MCF 10A (cell line): ENCODE measurements at regions of chr11 and their contacts with region 1.

Region 1: DNA sequence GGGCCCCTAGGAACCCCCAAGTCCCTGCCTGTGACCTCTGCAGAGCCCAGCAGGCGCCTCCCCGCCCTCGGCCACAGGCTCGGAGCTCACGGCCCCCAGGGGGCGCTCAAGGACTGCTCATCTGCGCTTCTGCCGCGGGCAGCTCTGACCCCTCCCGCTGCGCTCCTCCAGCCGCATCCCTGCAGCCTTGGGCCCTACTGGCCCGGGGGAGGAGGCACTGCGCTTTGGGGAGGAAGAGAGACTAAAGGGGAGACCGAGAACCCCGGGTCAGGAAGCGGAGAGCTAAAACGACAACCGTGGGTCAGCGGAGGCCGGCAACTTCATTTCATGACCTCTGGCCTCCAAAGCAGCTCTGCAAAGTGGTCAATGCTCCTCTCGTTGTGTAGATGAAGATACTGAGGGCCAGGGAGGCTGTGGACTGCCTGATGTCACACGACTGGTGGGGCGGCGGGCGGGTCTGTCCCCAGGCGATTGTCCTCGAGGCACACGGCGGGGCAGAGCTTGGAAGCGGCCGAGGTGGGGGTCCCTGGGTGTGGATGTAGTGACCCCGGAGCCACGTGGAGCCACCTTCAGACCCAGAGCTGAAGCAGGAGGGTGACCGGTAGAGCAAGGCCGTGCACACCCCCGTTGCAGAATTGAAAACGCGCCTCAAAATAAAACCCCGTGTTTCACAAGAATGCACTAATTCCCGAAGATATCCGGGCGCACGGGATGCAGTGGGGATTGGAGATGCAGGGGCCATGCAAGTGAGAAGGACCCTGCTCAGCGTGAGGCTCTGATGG is 2.7 kb upstream of the KRTAP5-6 start:
- DNase-seq: peak; percentile 69
- H3K4me3 Mint-ChIP-seq: peak overlapping the region; percentile 11
- H3K27ac Mint-ChIP-seq: no peak overlapping the region
- H3K4me1 Mint-ChIP-seq: peaks cover 11% of the 10 kb centered on the region
- H3K27me3 Mint-ChIP-seq: no peaks in the 10 kb centered on the region
- CTCF ChIP-seq: peak; percentile 91

Region 2: GRCh38 chr11:1652771-1653540 is 41.3 kb before region 1 on chr11:
- CTCF ChIA-PET with region 1: interaction called, 43 read pairs
- POLR2A ChIA-PET with region 1: interaction called, 7 read pairs
- intact Hi-C with region 1: loop called (anchors 5 kb)
- DNase-seq: peak; percentile 52
- H3K4me3 Mint-ChIP-seq: no peak overlapping the region
- H3K27ac Mint-ChIP-seq: no peak overlapping the region
- H3K4me1 Mint-ChIP-seq: peaks cover 4% of the 10 kb centered on the region
- H3K27me3 Mint-ChIP-seq: peaks cover under 1% of the 10 kb centered on the region
- CTCF ChIP-seq: peak; percentile 97

Region 3: DNA sequence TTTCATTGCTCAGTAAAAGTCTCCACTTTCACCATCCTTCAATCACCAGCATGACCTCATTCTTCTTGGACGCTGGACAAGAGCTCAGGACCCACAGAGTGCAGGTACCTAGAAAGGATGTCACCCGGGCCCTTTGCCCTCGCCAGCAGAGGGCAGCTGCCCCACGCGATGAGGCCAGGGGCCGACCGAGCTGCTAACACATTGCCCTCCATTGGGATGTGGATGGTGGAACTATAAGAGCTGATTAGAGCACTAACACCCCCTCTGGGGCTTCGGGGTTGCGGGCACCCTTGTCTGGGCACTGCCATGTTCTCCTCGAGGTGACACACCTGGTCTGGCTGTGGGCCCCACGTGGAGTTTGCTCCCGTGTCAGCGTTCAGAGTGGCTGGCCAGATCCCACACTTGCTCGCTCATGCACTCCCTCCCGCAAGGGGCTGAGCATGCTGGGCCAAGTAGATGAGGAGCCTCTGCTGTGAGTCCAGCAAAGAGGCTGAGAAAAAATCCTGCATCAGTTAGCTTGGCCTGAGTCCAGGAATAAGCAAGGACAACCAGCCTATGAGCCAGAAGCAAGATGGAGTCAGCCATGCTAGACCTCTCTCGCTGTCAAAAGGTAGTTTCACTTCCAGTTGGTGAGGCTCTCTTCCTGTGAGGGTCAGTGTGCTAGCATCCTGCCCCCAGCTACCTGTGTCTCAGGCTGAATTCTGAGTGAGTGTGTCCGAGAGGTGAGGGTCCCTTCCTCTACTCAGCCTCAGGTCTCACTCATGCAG is 12.6 kb after region 1 on chr11:
- CTCF ChIA-PET with region 1: interaction called, 29 read pairs
- POLR2A ChIA-PET with region 1: interaction called, 3 read pairs
- intact Hi-C with region 1: no loop called
- DNase-seq: peak; percentile 29
- H3K4me3 Mint-ChIP-seq: no peak overlapping the region
- H3K27ac Mint-ChIP-seq: no peak overlapping the region
- H3K4me1 Mint-ChIP-seq: peaks cover 5% of the 10 kb centered on the region
- H3K27me3 Mint-ChIP-seq: peaks cover 22% of the 10 kb centered on the region
- CTCF ChIP-seq: no peak

Region 4: DNA sequence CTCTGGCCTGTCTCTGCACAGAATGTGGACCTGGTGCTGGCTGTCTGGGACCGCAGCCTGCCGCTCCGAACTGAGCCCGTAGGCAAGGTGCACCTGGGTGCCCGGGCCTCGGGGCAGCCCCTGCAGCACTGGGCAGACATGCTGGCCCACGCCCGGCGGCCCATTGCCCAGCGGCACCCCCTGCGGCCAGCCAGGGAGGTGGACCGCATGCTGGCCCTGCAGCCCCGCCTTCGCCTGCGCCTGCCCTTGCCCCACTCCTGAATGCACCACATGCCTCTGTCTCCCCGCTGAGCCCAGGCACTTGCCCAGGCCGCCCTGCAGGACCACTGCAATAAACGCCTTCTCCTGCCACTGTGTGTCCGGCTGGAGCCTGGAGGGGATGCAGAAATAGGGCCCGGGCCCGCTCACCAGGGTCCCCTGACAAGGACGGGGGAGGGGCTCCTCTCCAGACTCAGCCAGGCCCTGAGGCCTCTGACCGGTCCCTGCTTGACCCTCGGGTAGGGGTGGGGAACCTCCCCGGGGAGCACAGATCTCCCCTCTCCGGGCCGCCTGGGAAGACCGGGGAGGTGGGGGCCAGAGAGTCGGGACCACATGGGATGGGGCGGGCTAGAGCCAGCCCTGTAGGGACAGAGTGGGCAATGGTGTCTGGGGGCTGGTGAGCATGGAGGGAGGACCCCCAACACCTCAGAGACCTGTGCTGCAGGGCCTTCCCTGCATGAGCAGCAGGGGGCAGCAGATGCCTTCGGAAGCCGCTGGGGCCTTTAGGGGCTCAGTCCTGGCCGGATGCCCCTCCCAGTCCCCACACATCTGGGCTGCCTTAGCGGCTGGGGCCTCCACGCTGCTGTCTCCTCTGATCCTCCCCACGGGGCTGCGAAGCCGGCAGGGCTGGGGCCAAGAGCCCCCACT is 143.2 kb after region 1 on chr11:
- CTCF ChIA-PET with region 1: interaction called, 171 read pairs
- POLR2A ChIA-PET with region 1: interaction called, 49 read pairs
- intact Hi-C with region 1: no loop called
- DNase-seq: peak; percentile 65
- H3K4me3 Mint-ChIP-seq: peak overlapping the region; percentile 78
- H3K27ac Mint-ChIP-seq: no peak overlapping the region
- H3K4me1 Mint-ChIP-seq: peaks cover 21% of the 10 kb centered on the region
- H3K27me3 Mint-ChIP-seq: no peaks in the 10 kb centered on the region
- CTCF ChIP-seq: peak; percentile 94

Region 5: GRCh38 chr11:1882519-1883238 is 188.4 kb after region 1 on chr11:
- CTCF ChIA-PET with region 1: interaction called, 18 read pairs
- POLR2A ChIA-PET with region 1: no interaction called
- intact Hi-C with region 1: no loop called
- DNase-seq: peak; percentile 79
- H3K4me3 Mint-ChIP-seq: no peak overlapping the region
- H3K27ac Mint-ChIP-seq: no peak overlapping the region
- H3K4me1 Mint-ChIP-seq: peaks cover 2% of the 10 kb centered on the region
- H3K27me3 Mint-ChIP-seq: no peaks in the 10 kb centered on the region
- CTCF ChIP-seq: peak; percentile 85

Region 6: DNA sequence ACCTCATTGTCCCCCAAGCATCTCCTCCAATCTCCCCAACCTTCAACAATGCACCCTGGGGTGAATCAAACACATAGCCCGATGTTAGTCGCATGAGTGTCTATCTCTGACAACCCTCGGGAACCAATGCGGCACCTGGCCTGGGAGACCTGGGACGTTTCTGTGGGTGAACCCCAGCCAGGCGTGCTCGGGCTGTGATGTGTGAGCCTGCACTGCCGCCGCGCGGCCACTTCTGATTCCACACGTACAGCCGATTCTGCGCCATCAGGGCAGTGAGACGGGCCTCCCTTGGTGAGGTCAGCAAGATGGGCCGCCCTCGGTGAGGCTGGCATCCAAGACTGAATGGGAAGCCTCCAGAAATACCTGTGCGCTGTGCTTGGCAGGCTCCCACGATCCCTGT is 308.6 kb after region 1 on chr11:
- CTCF ChIA-PET with region 1: interaction called, 87 read pairs
- POLR2A ChIA-PET with region 1: interaction called, 3 read pairs
- intact Hi-C with region 1: no loop called
- DNase-seq: no peak
- H3K4me3 Mint-ChIP-seq: no peak overlapping the region
- H3K27ac Mint-ChIP-seq: no peak overlapping the region
- H3K4me1 Mint-ChIP-seq: no peaks in the 10 kb centered on the region
- H3K27me3 Mint-ChIP-seq: no peaks in the 10 kb centered on the region
- CTCF ChIP-seq: no peak